GM12878 (cell line): ENCODE measurements at regions of chr7 and their contacts with region 1.

Region 1: DNA sequence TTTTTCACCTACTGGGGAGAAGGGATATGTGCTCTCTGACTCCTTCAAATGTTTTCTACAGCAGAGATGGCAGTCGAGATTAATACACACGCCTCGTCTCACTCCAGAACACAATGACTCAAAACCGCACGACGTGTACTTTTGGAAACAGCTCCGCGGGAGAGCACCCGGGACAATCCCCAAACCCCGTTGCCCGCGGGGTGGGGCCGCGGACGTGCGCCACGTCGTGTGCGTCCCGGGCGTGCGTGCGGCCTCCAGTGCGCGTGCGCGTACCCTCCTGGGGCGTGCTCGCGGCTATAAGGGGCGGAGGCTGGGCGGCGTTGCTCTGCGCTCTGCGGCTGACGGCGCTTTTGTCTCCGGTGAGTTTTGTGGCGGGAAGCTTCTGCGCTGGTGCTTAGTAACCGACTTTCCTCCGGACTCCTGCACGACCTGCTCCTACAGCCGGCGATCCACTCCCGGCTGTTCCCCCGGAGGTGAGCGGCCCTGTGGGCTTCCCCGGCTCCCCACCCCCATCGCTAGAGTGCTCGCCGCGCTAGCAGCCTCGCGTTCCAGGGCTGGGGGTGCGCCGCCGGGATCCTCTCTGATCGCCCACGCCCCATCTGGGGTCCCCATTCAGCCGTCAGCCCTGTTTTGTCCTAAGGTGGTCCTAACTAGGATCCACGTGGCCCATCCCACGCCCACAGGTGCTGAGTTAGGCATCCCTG is at the start of gene HILPDA:
- DNase-seq: peak; percentile 91
- ATAC-seq: peak; percentile 90
- H3K4me3 ChIP-seq: peak within 1 kb of the TSS; percentile 78
- H3K27ac ChIP-seq: peak within 1 kb of the TSS; percentile 84
- H3K4me1 ChIP-seq: peaks cover 29% of the 10 kb centered on the region
- H3K27me3 ChIP-seq: no peaks in the 10 kb centered on the region
- CTCF ChIP-seq: no peak; a peak in 1 of 6 replicates
- EP300 ChIP-seq: peak; percentile 56 to 80; a peak in 3 of 4 replicates
- POLR2A ChIP-seq: peak; percentile 91
- RAD21 ChIP-seq: no peak
- polyA plus RNA-seq, gene HILPDA: 37.4 to 44.0 TPM

Region 2: DNA sequence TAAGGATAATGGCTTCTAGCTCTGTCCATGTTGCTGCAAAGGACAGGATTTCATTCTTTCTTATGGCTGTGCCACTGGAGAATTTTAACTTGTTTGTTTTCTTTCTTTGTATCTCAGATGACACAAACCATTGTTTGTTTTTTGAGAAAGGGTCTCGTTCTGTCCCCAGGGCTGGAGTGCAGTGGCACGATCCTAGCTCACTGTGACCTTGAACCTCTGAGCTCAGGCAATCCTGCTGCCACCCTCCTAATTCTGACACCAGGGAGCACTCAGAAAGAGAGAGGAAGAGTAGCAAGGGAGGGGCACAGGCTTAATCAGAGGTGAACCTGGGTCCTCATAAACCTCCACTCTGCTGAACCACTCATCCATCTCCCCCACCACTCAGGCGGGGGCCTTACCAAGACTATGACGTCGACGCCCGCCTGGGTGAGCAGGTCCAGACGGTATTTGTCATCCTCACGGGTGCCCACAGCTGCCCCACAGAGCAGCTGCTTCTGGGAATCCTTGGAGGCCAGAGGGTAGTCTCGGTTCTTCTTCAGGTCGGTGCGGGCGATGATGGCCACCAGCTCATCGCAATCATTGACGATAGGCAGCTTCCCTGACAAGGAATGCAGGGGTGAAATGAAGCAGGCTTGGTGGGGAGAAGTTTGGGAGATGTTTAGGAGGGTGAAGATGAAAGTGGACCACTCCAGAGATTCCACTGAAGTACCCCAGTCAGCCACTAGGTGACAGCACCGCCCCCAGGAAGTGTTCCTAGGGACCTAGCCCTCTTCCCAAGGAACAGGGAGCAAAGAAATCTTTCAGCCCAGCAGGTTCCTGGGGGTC is 57.5 kb before region 1 on chr7:
- CTCF ChIA-PET with region 1: interaction called, 31 read pairs
- POLR2A ChIA-PET with region 1: no interaction called
- RAD21 ChIA-PET with region 1: interaction called, 3 read pairs
- SMC1A ChIA-PET with region 1: interaction called, 15 read pairs
- in situ Hi-C with region 1: no loop called
- intact Hi-C with region 1: loop called (anchors 1 kb)
- DNase-seq: no peak
- ATAC-seq: peak; percentile 73
- H3K4me3 ChIP-seq: no peak overlapping the region
- H3K27ac ChIP-seq: no peak overlapping the region
- H3K4me1 ChIP-seq: no peaks in the 10 kb centered on the region
- H3K27me3 ChIP-seq: no peaks in the 10 kb centered on the region
- CTCF ChIP-seq: peak; percentile 90 to 99 (median 91)
- EP300 ChIP-seq: no peak
- POLR2A ChIP-seq: no peak
- RAD21 ChIP-seq: peak; percentile 64

Region 3: GRCh38 chr7:128409596-128410160 is 46.0 kb before region 1 on chr7 and contains the start of gene IMPDH1:
- CTCF ChIA-PET with region 1: interaction called, 12 read pairs
- POLR2A ChIA-PET with region 1: interaction called, 7 read pairs
- RAD21 ChIA-PET with region 1: interaction called, 6 read pairs
- SMC1A ChIA-PET with region 1: interaction called, 6 read pairs
- in situ Hi-C with region 1: no loop called
- intact Hi-C with region 1: no loop called
- DNase-seq: no peak
- ATAC-seq: peak; percentile 90
- H3K4me3 ChIP-seq: peak within 1 kb of the TSS; percentile 90
- H3K27ac ChIP-seq: no peak within 1 kb of the TSS
- H3K4me1 ChIP-seq: peaks cover 8% of the 10 kb centered on the region
- H3K27me3 ChIP-seq: no peaks in the 10 kb centered on the region; a peak in 1 of 4 replicates
- CTCF ChIP-seq: no peak
- EP300 ChIP-seq: no peak
- POLR2A ChIP-seq: peak; percentile 68
- RAD21 ChIP-seq: no peak
- polyA plus RNA-seq, gene IMPDH1: 0.50 to 1.5 TPM

Region 4: DNA sequence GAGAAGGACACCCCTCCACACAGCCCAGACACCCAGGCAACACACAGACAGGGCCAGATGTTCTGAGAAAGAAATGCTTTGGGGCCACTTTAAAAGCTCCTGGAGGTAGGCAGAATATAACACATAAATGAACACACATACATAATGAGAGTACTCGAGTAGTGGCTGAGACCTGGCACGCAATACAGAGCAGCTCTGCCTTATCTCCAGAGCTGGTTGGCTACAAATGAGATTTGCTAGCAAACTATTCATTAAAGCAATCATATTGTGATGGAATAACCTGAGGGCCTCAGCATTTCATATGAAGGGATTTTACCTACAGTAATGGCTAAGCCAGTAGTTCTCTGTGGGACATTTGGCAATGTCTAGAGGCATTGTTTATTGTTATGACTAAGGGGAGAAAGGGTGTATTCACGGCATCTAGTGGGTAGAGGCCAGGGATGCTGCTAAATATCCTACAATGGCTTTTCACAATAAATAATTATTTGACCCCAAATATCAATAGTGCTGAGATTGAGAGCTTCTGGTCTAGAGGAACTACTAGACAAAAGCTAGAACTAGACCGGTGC is 40.4 kb before region 1 on chr7:
- CTCF ChIA-PET with region 1: interaction called, 8 read pairs
- POLR2A ChIA-PET with region 1: no interaction called
- RAD21 ChIA-PET with region 1: interaction called, 10 read pairs
- SMC1A ChIA-PET with region 1: interaction called, 6 read pairs
- in situ Hi-C with region 1: no loop called
- intact Hi-C with region 1: no loop called
- DNase-seq: no peak
- ATAC-seq: no peak
- H3K4me3 ChIP-seq: no peak overlapping the region
- H3K27ac ChIP-seq: no peak overlapping the region
- H3K4me1 ChIP-seq: no peaks in the 10 kb centered on the region; the same call in 1 of the 2 replicates
- H3K27me3 ChIP-seq: no peaks in the 10 kb centered on the region; a peak in 1 of 4 replicates
- CTCF ChIP-seq: no peak
- EP300 ChIP-seq: no peak
- POLR2A ChIP-seq: no peak
- RAD21 ChIP-seq: no peak

Region 5: DNA sequence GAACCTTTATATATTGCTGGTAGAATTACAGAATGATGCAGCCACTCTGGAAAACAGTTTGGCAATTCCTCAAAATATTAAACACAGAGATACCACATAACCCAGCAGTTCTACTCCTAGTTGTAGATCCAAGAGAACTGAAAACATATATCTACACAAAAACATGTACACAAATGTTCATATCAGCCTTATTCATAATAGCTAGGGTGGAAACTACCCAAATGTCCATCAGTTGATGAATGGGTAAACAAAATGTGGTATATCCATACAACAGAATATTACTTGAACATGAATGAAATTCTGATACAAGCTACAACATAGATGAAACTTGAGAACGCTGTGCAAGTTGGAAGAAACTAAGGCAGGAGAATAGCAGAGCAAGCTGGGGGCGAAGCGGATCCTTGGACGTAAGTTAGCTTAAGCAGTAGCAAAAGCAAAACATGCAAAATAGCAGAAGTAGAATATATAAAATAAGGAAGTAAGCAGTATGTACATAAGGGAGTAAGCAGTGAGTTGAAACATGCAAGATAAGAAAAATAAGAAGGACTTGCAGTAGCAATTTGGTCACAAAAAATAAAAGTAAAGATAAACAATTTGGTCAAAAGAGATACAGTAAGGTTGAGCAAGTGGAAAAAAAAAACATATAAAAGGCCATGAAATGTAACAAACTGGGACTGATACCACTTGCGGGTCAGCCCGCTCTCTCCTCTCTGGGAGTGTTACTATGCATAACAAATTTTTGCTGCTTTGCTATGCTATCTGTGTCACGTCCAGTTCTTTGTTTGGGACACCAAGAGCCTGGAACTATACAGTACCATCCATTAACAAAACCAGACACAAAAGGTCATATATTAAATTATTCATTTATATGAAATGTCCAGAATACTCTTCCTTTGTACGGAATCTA is 18.0 kb before region 1 on chr7:
- CTCF ChIA-PET with region 1: interaction called, 463 read pairs
- POLR2A ChIA-PET with region 1: interaction called, 31 read pairs
- RAD21 ChIA-PET with region 1: interaction called, 216 read pairs
- SMC1A ChIA-PET with region 1: interaction called, 296 read pairs
- in situ Hi-C with region 1: no loop called
- intact Hi-C with region 1: no loop called
- DNase-seq: no peak
- ATAC-seq: peak; percentile 74
- H3K4me3 ChIP-seq: no peak overlapping the region
- H3K27ac ChIP-seq: no peak overlapping the region
- H3K4me1 ChIP-seq: peaks cover 4% of the 10 kb centered on the region
- H3K27me3 ChIP-seq: no peaks in the 10 kb centered on the region
- CTCF ChIP-seq: no peak
- EP300 ChIP-seq: no peak
- POLR2A ChIP-seq: no peak
- RAD21 ChIP-seq: no peak

Region 6: DNA sequence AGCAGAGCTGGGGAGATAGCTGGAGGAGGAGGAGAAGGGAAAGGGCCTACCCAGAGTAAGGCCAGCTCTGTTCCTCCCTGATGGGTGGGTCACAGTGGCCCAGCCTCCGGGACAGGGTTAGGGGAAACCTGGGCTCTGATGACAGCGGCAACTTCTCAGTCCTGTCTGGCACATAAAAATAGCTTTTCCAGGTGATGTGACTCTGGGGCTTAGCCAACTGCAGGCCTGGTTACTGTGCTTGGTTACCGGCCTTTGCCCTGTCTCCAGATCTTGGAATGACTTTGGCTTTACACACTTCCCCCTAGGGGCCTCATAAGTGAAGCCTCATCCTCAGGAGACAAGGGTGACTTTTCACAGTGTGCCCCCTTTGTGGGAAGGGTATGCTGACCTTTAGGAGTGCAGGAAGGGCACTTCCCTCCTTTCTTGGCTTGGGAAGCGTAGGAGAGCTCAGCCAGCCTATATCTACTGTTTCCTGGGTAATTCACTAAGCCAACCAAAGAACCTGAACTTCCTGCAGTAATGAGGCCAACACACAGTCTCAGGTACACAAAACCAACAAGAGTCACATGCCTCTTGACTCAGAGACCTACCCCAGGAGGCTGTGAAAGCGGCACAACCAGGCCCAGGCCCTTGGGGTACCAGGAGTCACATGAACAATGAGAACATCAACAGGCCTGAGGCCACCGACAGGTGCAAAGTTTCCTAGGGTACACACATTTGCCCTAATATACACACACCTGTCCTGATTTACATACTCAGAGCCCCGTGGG is 11.7 kb before region 1 on chr7:
- CTCF ChIA-PET with region 1: interaction called, 463 read pairs
- POLR2A ChIA-PET with region 1: interaction called, 52 read pairs
- RAD21 ChIA-PET with region 1: interaction called, 23 read pairs
- SMC1A ChIA-PET with region 1: interaction called, 296 read pairs
- in situ Hi-C with region 1: no loop called
- intact Hi-C with region 1: no loop called
- DNase-seq: no peak
- ATAC-seq: peak; percentile 42
- H3K4me3 ChIP-seq: no peak overlapping the region
- H3K27ac ChIP-seq: no peak overlapping the region
- H3K4me1 ChIP-seq: peaks cover 9% of the 10 kb centered on the region; the same call in 1 of the 2 replicates
- H3K27me3 ChIP-seq: no peaks in the 10 kb centered on the region
- CTCF ChIP-seq: no peak
- EP300 ChIP-seq: no peak
- POLR2A ChIP-seq: no peak
- RAD21 ChIP-seq: no peak

Region 7: GRCh38 chr7:128732521-128733277 is 277.0 kb after region 1 on chr7:
- CTCF ChIA-PET with region 1: no interaction called
- POLR2A ChIA-PET with region 1: no interaction called
- RAD21 ChIA-PET with region 1: no interaction called
- SMC1A ChIA-PET with region 1: no interaction called
- in situ Hi-C with region 1: no loop called
- intact Hi-C with region 1: no loop called
- DNase-seq: no peak
- ATAC-seq: no peak
- H3K4me3 ChIP-seq: no peak overlapping the region
- H3K27ac ChIP-seq: no peak overlapping the region
- H3K4me1 ChIP-seq: no peaks in the 10 kb centered on the region
- H3K27me3 ChIP-seq: no peaks in the 10 kb centered on the region; a peak in 1 of 4 replicates
- CTCF ChIP-seq: no peak
- EP300 ChIP-seq: no peak
- POLR2A ChIP-seq: no peak
- RAD21 ChIP-seq: no peak